GM12878 (cell line): ENCODE measurements at regions of chr3 and their contacts with region 1.

Region 1: DNA sequence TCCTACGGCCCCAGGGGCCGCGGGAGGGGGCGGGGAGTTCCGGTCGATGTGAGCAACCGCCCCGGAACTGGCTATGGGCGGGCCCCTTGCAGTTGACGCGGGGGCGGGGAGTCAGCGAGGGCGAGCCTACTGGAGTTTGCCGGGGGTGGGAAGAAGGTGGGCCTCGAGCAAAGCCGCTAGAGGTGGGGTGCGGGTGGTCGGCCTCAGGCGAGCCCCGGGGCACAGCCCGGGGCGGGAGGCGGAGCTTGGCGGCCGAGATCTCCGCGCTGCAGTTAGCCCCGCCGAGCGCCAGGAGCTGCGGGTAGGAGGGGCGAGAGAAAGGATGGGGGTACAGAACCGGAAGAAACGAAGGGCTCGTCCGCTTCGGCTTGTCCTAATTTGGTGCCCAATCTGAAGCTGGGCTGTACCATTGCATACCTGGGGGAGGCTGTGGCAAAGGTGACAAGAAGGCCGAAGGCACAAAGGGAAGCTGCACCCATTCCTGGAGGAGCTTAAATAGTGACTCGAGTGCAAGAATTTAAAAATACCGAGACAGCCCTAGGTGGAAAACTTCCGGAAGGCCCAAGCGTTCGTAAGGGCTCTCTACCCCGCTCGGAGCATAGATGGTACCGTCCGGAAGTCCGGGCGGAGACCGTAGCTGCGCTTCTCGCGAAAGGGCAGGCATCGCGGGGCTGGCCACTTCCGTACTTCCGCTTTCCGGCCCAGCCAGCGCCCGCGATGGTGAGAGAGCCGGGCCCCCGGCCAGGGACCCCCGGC is at the starts of genes ARPC4 and TADA3:
- DNase-seq: peak; percentile 92
- ATAC-seq: peak; percentile 88
- H3K4me3 ChIP-seq: peak within 1 kb of the TSS; percentile 89
- H3K27ac ChIP-seq: peak within 1 kb of the TSS; percentile 99
- H3K4me1 ChIP-seq: peaks cover 14% of the 10 kb centered on the region
- H3K27me3 ChIP-seq: no peaks in the 10 kb centered on the region
- CTCF ChIP-seq: no peak
- EP300 ChIP-seq: no peak
- POLR2A ChIP-seq: peak; percentile 83
- RAD21 ChIP-seq: no peak
- polyA plus RNA-seq, gene ARPC4: 42.0 to 55.9 TPM
- polyA plus RNA-seq, gene TADA3: 2.6 to 9.0 TPM

Region 2: GRCh38 chr3:9485248-9485647 is 307.3 kb before region 1 on chr3:
- CTCF ChIA-PET with region 1: no interaction called
- POLR2A ChIA-PET with region 1: no interaction called
- RAD21 ChIA-PET with region 1: no interaction called
- SMC1A ChIA-PET with region 1: no interaction called
- in situ Hi-C with region 1: no loop called
- intact Hi-C with region 1: no loop called
- DNase-seq: no peak
- ATAC-seq: no peak
- H3K4me3 ChIP-seq: no peak overlapping the region
- H3K27ac ChIP-seq: no peak overlapping the region
- H3K4me1 ChIP-seq: no peaks in the 10 kb centered on the region
- H3K27me3 ChIP-seq: no peaks in the 10 kb centered on the region
- CTCF ChIP-seq: no peak
- EP300 ChIP-seq: no peak
- POLR2A ChIP-seq: no peak
- RAD21 ChIP-seq: no peak

Region 3: GRCh38 chr3:9649791-9650521 is 142.6 kb before region 1 on chr3:
- CTCF ChIA-PET with region 1: interaction called, 3 read pairs
- POLR2A ChIA-PET with region 1: interaction called, 8 read pairs
- RAD21 ChIA-PET with region 1: no interaction called
- SMC1A ChIA-PET with region 1: no interaction called
- in situ Hi-C with region 1: no loop called
- intact Hi-C with region 1: loop called (anchors 5 kb)
- DNase-seq: peak; percentile 47
- ATAC-seq: peak; percentile 76
- H3K4me3 ChIP-seq: peak overlapping the region; percentile 98
- H3K27ac ChIP-seq: peak overlapping the region; percentile 85
- H3K4me1 ChIP-seq: peaks cover 24% of the 10 kb centered on the region
- H3K27me3 ChIP-seq: no peaks in the 10 kb centered on the region
- CTCF ChIP-seq: no peak
- EP300 ChIP-seq: peak; percentile 31 to 78; a peak in 3 of 4 replicates
- POLR2A ChIP-seq: peak; percentile 22; the same call in 1 of the 2 replicates
- RAD21 ChIP-seq: no peak

Region 4: DNA sequence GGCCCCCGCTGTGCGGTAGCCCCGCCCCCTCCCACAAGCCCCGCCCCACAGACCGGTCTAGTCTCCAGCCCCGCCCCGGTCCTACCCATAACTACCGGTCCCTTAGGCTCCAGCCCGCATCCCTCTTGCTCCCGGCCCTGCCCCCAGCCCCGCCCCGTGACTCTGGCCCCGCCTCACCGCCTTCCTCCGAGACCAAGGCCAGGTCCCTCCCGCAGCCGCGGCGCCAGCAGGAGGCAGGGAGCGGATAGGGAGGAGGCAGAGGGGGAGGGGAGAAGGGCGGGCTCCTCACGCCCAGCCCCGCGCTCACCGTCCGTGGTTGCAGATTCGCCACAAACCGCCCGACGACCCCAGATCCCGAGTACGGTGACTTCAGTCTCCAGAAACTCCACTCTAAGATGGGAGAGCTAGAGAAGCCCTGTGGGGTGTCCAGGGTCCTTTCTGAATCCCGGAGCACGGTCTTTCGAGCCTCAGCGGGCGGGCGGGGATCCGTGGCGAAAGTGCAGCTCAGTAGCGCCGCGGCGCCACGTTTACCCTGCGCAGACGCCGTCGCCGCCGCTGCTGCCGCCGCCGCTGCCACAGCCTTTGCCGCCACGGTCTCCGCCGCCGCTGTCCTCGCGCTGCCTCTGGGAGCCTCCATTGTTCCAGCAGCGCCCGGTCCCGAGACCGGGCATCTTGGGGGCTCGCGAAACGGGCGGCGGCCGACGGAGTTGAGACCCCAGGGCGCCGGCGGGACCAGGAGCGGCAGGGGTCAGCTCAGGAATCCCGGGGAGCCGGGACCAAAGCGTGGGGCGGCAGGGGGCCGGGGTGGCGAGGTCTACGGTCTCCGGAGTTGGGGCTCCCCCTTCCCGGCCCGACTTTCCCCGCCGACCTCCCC is 61.1 kb before region 1 on chr3 and contains the start of gene BRPF1:
- CTCF ChIA-PET with region 1: interaction called, 5 read pairs
- POLR2A ChIA-PET with region 1: interaction called, 10 read pairs
- RAD21 ChIA-PET with region 1: interaction called, 6 read pairs
- SMC1A ChIA-PET with region 1: interaction called, 4 read pairs
- in situ Hi-C with region 1: no loop called
- intact Hi-C with region 1: loop called (anchors 5 kb)
- DNase-seq: peak; percentile 90
- ATAC-seq: peak; percentile 97
- H3K4me3 ChIP-seq: peak within 1 kb of the TSS; percentile 94
- H3K27ac ChIP-seq: peak within 1 kb of the TSS; percentile 100
- H3K4me1 ChIP-seq: peaks cover 12% of the 10 kb centered on the region
- H3K27me3 ChIP-seq: no peaks in the 10 kb centered on the region
- CTCF ChIP-seq: no peak
- EP300 ChIP-seq: peak in 1 of 2 experiments; percentile 99; a peak in 2 of 4 replicates
- POLR2A ChIP-seq: peak; percentile 92
- RAD21 ChIP-seq: no peak
- polyA plus RNA-seq, gene BRPF1: 1.2 to 1.4 TPM

Region 5: DNA sequence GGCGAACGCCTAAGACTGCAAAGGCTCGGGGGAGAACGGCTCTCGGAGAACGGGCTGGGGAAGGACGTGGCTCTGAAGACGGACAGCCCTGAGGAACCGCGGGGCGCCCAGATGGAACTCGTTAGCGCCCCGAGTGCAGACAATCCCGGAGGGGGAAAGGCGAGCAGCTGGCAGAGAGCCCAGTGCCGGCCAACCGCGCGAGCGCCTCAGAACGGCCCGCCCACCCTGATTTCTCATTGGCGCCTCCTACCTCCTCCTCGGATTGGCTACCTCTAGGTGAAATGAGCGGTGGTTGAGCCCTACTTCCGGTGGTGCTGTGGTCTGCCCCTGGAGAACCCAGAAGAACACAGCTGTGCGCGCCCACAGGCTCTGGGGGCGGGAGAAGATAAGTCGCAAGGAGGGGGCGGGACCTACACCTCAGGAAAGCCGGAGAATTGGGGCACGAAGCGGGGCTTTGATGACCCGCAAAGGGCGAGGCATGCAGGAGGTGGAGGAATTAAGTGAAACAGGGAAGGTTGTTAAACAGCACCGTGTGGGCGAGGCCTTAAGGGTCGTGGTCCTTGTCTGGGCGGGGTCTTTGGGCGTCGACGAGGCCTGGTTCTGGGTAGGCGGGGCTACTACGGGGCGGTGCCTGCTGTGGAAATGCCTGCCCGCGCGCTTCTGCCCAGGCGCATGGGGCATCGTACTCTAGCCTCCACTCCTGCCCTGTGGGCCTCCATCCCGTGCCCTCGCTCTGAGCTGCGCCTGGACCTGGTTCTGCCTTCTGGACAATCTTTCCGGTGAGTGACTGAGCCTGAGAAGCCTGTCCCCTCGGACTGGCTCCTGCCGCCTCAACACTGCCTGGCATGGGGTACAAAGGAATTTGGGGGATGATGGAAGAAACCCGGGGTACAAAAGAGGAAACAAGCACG is 42.7 kb before region 1 on chr3 and contains the start of gene OGG1:
- CTCF ChIA-PET with region 1: interaction called, 4 read pairs
- POLR2A ChIA-PET with region 1: interaction called, 20 read pairs
- RAD21 ChIA-PET with region 1: interaction called, 10 read pairs
- SMC1A ChIA-PET with region 1: interaction called, 11 read pairs
- in situ Hi-C with region 1: no loop called
- intact Hi-C with region 1: loop called (anchors 1 kb)
- DNase-seq: peak; percentile 95
- ATAC-seq: peak; percentile 95
- H3K4me3 ChIP-seq: peak within 1 kb of the TSS; percentile 88
- H3K27ac ChIP-seq: peak within 1 kb of the TSS; percentile 82
- H3K4me1 ChIP-seq: peaks cover 21% of the 10 kb centered on the region
- H3K27me3 ChIP-seq: no peaks in the 10 kb centered on the region
- CTCF ChIP-seq: no peak
- EP300 ChIP-seq: peak in 1 of 2 experiments; percentile 20; a peak in 1 of 4 replicates
- POLR2A ChIP-seq: peak; percentile 62
- RAD21 ChIP-seq: no peak
- polyA plus RNA-seq, gene OGG1: 4.8 to 6.9 TPM

Region 6: DNA sequence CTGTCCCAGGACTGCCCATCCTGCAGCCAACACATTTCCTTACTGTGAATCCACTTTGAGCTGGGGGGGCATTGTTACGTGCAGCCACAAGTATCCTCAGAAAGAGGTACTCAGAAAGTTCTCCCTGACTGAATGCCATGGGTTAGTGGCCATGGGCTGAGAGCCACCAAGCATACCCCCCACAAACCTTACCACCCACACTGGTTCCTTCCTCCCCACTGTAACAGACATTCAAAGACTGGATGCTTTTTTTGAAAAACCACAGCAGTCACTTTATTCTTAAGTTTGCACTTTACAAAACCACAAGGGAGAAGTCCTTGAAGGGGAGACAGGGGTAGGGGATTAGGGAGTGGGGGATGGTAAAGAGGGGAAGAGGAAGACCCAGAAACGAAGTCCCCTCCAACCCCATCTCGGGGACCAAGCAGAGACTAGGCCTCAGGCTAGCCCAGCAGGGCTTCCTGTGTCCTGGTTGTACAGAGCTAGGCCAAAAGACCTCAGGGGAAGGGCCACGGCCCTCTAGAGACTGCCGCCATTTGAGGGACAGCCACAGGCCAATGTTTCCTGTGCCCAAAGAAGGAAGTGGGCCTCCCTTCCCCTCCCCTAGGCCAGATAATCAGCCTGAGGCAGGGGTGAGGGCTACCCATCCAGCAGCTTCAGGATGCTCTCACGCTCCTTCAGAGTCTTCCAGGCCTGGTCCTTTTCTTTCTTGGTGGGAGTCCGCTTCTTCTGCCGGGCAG is 12.7 kb before region 1 on chr3:
- CTCF ChIA-PET with region 1: interaction called, 15 read pairs
- POLR2A ChIA-PET with region 1: interaction called, 9 read pairs
- RAD21 ChIA-PET with region 1: interaction called, 6 read pairs
- SMC1A ChIA-PET with region 1: interaction called, 8 read pairs
- in situ Hi-C with region 1: no loop called
- intact Hi-C with region 1: no loop called
- DNase-seq: peak; percentile 59
- ATAC-seq: peak; percentile 82
- H3K4me3 ChIP-seq: no peak overlapping the region
- H3K27ac ChIP-seq: peak overlapping the region; percentile 50
- H3K4me1 ChIP-seq: peaks cover 31% of the 10 kb centered on the region
- H3K27me3 ChIP-seq: no peaks in the 10 kb centered on the region
- CTCF ChIP-seq: no peak
- EP300 ChIP-seq: peak in 1 of 2 experiments; percentile 45; a peak in 1 of 4 replicates
- POLR2A ChIP-seq: no peak; the same call in 1 of the 2 replicates
- RAD21 ChIP-seq: no peak

Region 7: DNA sequence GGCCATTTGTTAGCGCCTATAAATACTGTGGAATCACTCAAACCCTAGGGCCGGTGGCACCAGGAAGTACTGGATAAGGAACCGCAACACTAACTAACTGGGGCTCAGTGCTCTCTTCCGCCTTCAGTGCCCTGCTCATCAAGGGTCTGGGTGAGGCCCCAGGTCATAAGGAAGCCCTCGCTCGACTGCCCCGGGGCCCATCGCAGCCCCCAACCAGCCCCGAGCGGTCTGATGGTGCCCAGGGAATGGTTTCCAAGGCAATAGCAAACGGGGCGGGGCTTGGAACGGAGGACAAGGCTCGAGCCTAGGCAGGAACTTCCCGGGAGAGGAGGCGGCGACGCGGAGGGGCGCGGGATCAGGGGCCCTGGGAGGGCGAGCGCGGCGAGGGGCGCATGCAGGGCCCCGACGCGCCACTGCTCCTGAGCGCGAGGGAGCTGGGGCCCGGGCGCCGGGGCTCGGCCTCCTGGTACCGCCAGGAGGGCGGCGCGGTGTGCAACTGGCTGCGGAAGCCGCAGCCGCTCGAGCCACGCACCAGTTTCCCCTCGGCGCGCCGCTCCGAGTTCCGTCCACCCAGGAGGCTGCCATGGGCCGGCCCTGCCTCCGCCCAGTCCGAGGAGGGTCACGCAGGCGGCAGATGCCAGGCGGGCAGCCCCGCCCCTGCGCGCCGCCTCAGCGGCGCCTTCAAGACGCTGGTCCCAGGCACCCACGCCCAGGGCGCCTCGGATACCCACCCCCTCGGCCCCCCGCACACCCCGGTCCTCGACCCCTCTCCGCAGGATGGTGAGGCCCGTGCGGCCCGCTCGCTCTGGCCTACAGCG is 17.2 kb after region 1 on chr3 and contains the start of gene TTLL3:
- CTCF ChIA-PET with region 1: interaction called, 4 read pairs
- POLR2A ChIA-PET with region 1: interaction called, 19 read pairs
- RAD21 ChIA-PET with region 1: interaction called, 5 read pairs
- SMC1A ChIA-PET with region 1: interaction called, 7 read pairs
- in situ Hi-C with region 1: no loop called
- intact Hi-C with region 1: no loop called
- DNase-seq: no peak
- ATAC-seq: peak; percentile 74
- H3K4me3 ChIP-seq: peak within 1 kb of the TSS; percentile 81
- H3K27ac ChIP-seq: peak within 1 kb of the TSS; percentile 75
- H3K4me1 ChIP-seq: peaks cover 13% of the 10 kb centered on the region
- H3K27me3 ChIP-seq: no peaks in the 10 kb centered on the region
- CTCF ChIP-seq: no peak
- EP300 ChIP-seq: no peak
- POLR2A ChIP-seq: peak; percentile 93
- RAD21 ChIP-seq: no peak
- polyA plus RNA-seq, gene TTLL3: 4.2 to 6.8 TPM

Region 8: DNA sequence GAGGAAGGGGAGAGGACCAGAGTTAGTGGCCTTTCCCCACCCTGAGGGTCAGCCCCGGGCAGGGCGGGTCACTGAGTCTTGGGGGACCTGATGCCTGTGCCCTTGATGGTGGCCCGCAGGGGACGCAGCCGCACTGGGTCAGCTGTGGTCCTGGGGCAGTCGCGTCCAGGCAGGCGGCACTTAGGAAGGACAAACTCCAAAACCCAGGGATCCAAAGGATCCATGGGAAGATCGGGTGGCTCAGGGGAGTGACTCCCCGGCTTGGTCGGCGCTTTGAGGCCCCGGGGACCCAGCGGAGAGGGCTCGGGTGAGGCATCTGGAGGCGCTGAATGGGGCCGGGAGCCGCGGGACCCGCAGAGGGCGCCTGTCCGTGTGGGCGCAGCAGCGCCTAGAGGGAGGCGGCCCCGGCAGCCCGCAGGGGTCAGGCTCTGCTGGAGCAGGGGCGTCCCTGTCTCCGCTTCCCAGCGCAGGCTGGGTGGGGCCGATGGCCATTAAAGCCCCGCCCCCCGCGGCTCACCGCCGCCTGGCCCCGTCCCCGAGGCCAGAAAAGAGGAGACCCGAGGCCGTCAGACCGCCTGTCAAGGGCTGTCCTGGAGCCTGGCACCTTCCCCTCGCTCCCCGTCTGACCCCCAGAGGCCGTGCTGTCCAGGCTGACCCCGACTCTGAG is 69.9 kb after region 1 on chr3:
- CTCF ChIA-PET with region 1: no interaction called
- POLR2A ChIA-PET with region 1: no interaction called
- RAD21 ChIA-PET with region 1: no interaction called
- SMC1A ChIA-PET with region 1: no interaction called
- in situ Hi-C with region 1: no loop called
- intact Hi-C with region 1: no loop called
- DNase-seq: no peak
- ATAC-seq: peak; percentile 84
- H3K4me3 ChIP-seq: no peak overlapping the region
- H3K27ac ChIP-seq: no peak overlapping the region
- H3K4me1 ChIP-seq: no peaks in the 10 kb centered on the region
- H3K27me3 ChIP-seq: peaks cover 2 to 3% of the 10 kb centered on the region in 2 experiments; a peak in 2 of 4 replicates
- CTCF ChIP-seq: no peak
- EP300 ChIP-seq: no peak
- POLR2A ChIP-seq: no peak
- RAD21 ChIP-seq: no peak

Region 9: DNA sequence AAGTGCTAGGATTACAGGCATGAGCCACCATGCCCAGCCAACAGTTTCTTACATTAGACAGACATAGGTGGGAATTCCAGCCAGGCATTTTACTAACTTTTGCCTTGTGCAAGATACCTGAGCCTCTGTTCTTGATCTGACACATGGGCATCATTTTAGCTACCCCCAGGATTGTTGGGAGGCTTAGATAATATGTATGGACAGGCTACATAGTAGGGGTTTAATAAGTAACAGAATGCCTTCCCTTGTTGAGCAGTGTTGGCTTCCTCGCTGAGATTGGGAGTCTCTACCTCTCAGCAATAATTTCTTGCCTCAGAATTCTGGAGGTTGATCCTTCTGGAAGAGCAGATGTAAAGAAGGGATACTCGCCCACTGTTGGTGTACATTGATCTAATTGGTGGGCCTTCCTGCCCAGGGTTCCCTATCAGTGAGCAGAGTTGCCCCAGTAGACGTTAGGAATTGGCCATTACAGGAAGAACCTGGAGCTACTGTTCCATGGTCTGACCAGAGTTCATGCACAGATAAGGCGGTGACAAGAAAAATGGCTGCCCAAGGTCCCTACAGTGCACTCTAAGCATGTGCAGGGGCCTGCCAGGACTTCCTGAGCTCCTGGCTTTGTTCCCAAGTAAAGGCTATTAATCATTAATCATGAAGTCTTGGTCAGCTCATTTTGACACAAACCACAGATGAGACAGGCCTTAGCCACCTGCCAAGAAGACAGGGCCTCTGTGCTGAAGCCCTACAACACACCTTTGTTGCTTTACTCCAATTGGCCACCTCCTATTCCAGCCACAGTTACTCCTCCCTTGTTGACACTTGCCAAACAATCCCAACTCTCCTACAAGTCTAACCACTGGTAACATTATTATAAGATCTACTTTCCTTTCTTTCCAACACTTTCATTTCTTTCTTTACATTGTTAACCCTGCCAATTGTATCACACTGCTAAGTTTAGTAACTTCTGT is 105.1 kb after region 1 on chr3:
- CTCF ChIA-PET with region 1: no interaction called
- POLR2A ChIA-PET with region 1: no interaction called
- RAD21 ChIA-PET with region 1: no interaction called
- SMC1A ChIA-PET with region 1: no interaction called
- in situ Hi-C with region 1: no loop called
- intact Hi-C with region 1: no loop called
- DNase-seq: peak; percentile 28
- ATAC-seq: peak; percentile 65
- H3K4me3 ChIP-seq: no peak overlapping the region
- H3K27ac ChIP-seq: no peak overlapping the region
- H3K4me1 ChIP-seq: peaks cover 8% of the 10 kb centered on the region
- H3K27me3 ChIP-seq: no peaks in the 10 kb centered on the region
- CTCF ChIP-seq: no peak
- EP300 ChIP-seq: no peak
- POLR2A ChIP-seq: no peak
- RAD21 ChIP-seq: no peak

Region 10: DNA sequence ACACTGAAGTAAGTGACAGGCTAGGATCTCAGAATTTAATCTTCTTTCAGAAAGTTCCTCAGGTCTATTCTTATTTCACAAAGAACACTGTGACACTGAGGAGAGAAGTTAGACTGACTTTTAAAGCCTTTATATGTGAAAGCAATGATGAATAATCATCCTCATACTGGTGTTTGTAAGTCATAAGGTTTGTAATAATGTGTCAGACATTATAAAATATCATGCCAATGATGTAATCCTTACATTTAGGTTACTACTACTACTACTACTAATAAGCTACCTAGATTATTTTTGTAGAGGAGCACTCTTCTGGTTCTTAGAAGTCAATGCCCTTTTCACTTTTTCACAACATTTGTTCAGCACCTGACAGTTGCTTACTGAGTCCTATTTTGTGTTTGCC is 282.1 kb after region 1 on chr3:
- CTCF ChIA-PET with region 1: no interaction called
- POLR2A ChIA-PET with region 1: no interaction called
- RAD21 ChIA-PET with region 1: no interaction called
- SMC1A ChIA-PET with region 1: no interaction called
- in situ Hi-C with region 1: no loop called
- intact Hi-C with region 1: no loop called
- DNase-seq: no peak
- ATAC-seq: no peak
- H3K4me3 ChIP-seq: no peak overlapping the region
- H3K27ac ChIP-seq: no peak overlapping the region
- H3K4me1 ChIP-seq: no peaks in the 10 kb centered on the region
- H3K27me3 ChIP-seq: no peaks in the 10 kb centered on the region
- CTCF ChIP-seq: no peak
- EP300 ChIP-seq: no peak
- POLR2A ChIP-seq: no peak
- RAD21 ChIP-seq: no peak